Posterior vena cava (tissue), 2 donors: ENCODE measurements at regions of chr22 and their contacts with region 1.

Region 1: DNA sequence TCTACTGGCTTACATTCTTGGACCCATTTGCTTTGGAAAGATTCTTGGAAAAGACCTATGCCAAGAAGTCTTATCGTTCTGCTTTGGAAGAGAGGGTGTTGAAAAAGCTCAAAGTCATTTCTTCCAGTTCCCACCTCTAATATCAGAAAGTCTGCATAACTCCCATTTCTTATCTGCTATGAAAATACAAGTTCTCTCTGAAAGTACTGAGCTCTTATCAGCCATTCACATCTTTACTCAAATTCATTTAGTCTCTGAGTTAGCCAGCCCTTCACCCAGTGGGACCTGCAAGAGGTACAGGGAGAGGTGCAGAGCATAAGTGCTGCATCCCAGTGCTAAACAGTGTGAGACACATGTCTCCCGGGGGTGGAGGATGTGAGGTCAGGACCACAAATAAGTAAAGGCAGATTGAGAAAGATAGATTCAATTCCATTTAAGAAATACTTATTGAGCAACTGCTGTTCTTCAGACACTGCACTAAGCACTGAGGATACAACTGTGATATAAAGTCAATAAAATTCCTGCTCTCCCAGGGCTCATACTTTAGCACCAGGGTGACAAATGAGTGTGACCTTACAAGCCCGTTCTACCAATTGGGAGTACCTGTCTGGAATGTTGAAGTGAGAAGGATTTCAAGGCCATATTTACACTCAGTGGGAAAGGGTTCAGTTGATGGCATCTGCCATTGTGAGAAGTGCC is 76.7 kb downstream of the PISD start:
- DNase-seq: peak; percentile 67

Region 2: GRCh38 chr22:30910358-30910757 is 675.0 kb before region 1 on chr22:
- intact Hi-C with region 1: loop called in 1 of 2 experiments (anchors 10 kb)
- DNase-seq: no peak

Region 3: GRCh38 chr22:31836010-31836409 is 250.7 kb after region 1 on chr22:
- intact Hi-C with region 1: no loop called
- DNase-seq: no peak

Region 4: GRCh38 chr22:32528984-32529982 is 944.0 kb after region 1 on chr22:
- intact Hi-C with region 1: no loop called
- DNase-seq: peak; percentile 96